HepG2 (cell line): ENCODE measurements at regions of chr11 and their contacts with region 1.

Region 1: GRCh38 chr11:94128746-94129511 is at the start of gene PANX1:
- DNase-seq: peak; percentile 76
- ATAC-seq: peak; percentile 91
- H3K4me3 ChIP-seq: peak within 1 kb of the TSS; percentile 90 to 96 (median 94)
- H3K27ac ChIP-seq: peak within 1 kb of the TSS; percentile 87
- H3K4me1 ChIP-seq: peaks cover 43% of the 10 kb centered on the region
- H3K27me3 ChIP-seq: no peaks in the 10 kb centered on the region; a peak in 1 of 5 replicates
- CTCF ChIP-seq: no peak
- EP300 ChIP-seq: peak in 1 of 2 experiments; percentile 26; a peak in 1 of 4 replicates
- POLR2A ChIP-seq: peak; percentile 57 to 74
- RAD21 ChIP-seq: peak; percentile 52; the same call in 1 of the 2 replicates
- total RNA-seq, gene PANX1: 21.7 and 24.8 TPM in 2 replicates

Region 2: DNA sequence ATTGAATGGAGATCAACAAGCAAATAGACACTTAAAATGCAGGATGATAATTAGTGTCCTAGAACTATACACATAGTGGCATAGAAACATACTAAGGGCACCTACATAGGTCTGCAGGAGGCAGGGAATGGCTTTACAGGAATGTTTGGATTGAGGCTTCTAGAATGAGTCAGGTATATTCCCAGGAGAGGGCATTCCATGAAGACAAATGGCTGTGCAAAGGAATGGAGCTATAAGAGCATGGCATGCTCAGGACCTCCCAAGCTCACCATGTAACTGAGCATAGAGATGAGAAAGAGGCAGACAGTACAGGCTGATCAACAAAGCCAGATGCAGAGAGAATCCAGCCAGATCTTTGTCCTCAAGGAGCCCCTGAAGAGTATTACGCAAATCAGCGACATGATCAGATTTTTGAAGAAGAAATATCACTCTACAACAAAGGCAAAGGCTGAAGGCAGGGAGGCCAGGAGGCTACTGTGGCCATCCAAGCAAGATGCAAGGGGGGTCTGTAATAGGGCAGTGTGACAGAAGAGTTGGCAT is 1370.6 kb before region 1 on chr11:
- CTCF ChIA-PET with region 1: no interaction called
- POLR2A ChIA-PET with region 1: no interaction called
- in situ Hi-C with region 1: no loop called
- intact Hi-C with region 1: no loop called
- DNase-seq: no peak
- ATAC-seq: no peak
- H3K4me3 ChIP-seq: no peak overlapping the region
- H3K27ac ChIP-seq: no peak overlapping the region
- H3K4me1 ChIP-seq: no peaks in the 10 kb centered on the region
- H3K27me3 ChIP-seq: no peaks in the 10 kb centered on the region
- CTCF ChIP-seq: no peak
- EP300 ChIP-seq: no peak
- POLR2A ChIP-seq: no peak
- RAD21 ChIP-seq: no peak

Region 3: GRCh38 chr11:93921695-93922468 is 207.0 kb before region 1 on chr11:
- CTCF ChIA-PET with region 1: no interaction called
- POLR2A ChIA-PET with region 1: interaction called, 3 read pairs
- in situ Hi-C with region 1: no loop called
- intact Hi-C with region 1: loop called (anchors 10 kb)
- DNase-seq: peak; percentile 56
- ATAC-seq: peak; percentile 85
- H3K4me3 ChIP-seq: no peak overlapping the region
- H3K27ac ChIP-seq: no peak overlapping the region
- H3K4me1 ChIP-seq: peaks cover 19% of the 10 kb centered on the region
- H3K27me3 ChIP-seq: no peaks in the 10 kb centered on the region
- CTCF ChIP-seq: peak; percentile 87
- EP300 ChIP-seq: no peak
- POLR2A ChIP-seq: no peak
- RAD21 ChIP-seq: peak; percentile 76

Region 4: GRCh38 chr11:94117871-94118270 is 11.1 kb before region 1 on chr11:
- CTCF ChIA-PET with region 1: no interaction called
- POLR2A ChIA-PET with region 1: interaction called, 16 read pairs
- in situ Hi-C with region 1: no loop called
- intact Hi-C with region 1: no loop called
- DNase-seq: no peak
- ATAC-seq: no peak
- H3K4me3 ChIP-seq: no peak overlapping the region
- H3K27ac ChIP-seq: no peak overlapping the region
- H3K4me1 ChIP-seq: peaks cover 19% of the 10 kb centered on the region
- H3K27me3 ChIP-seq: no peaks in the 10 kb centered on the region
- CTCF ChIP-seq: no peak
- EP300 ChIP-seq: no peak
- POLR2A ChIP-seq: no peak
- RAD21 ChIP-seq: no peak

Region 5: DNA sequence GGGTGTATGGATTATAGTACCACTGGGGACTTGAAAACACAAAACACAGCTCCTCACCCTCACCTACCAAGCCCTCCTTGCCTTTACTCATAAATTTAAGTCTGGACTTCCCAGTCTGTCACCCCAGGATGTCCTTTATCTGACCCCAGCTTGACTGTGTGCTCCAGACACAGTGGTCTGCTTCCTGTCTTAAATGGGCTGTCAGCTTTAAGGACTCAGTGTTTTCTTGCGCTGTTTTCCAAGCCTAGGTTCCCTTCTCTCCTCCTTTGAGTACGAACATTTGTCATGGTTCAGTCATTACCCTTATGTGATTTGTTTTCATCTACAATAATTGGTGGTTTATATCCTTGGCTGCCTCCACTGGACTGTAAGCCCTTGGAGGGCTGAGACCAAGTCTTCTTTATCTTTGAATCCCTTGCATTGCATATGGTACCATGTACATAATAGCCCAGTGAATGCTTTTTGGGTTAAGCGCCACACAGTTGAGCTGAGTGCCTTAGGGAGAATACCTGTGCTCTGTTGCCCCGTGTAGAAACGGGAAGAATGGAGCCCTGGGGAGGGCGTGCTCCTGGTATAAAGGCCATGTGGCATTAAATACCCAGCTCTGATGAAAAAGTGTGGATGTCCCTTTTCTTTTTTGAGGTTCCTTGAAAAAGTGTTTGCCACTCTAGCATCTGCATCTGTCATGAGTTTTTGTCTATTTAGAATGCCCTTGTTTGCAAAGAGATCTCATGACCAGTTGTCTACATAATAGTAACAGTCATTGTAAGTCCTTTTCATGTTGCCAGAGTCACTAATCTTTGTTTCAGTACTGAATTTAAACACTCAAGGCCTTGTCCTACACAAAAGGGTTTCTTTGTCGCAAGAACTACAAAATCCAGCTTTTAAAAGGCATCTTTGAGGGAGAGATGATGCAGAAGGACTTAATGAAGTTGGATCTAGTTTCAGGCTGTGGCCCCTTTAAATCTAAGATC is 13.7 kb after region 1 on chr11:
- CTCF ChIA-PET with region 1: no interaction called
- POLR2A ChIA-PET with region 1: interaction called, 10 read pairs
- in situ Hi-C with region 1: no loop called
- intact Hi-C with region 1: no loop called
- DNase-seq: peak; percentile 56
- ATAC-seq: 0 out of 3 replicates have a peak, but pooled peaks have one; percentile 18
- H3K4me3 ChIP-seq: no peak overlapping the region
- H3K27ac ChIP-seq: no peak overlapping the region
- H3K4me1 ChIP-seq: peaks cover 61% of the 10 kb centered on the region
- H3K27me3 ChIP-seq: no peaks in the 10 kb centered on the region
- CTCF ChIP-seq: no peak
- EP300 ChIP-seq: no peak
- POLR2A ChIP-seq: no peak
- RAD21 ChIP-seq: no peak

Region 6: DNA sequence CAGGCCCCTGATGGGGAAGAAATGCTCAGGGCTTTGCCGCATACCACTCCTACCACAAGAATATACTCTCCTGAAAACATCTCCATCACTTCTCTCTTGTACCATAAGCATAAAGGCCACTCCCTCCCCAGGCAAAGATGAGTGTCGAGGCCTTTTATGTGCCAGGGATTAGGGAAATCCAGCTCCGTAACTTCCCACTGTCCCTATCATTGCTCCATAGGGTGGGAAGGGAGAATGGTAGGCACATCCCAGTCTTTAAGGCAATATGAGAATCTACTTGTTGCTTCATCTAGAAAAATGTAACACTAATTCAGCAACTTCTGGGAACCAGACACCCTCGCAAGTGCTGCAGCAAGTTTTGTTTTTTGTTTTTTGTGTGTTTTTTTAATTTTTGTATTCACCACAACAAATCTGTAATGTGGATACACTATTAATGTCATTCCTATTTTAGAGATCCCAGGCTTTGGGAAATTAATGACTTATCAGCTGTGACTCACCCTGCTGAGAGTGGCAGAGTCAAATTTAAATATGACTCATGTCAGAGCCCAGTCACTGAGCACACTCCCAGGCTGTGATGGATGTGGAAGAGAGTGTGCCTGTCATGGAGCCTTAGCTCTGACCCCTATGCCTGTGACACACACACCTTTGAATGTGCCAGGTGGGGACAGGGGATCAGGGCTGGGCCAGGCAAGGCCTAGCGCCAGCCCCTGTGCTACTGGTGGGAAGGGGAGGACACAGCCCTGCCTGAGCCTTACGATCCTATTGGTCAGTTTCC is 23.2 kb after region 1 on chr11:
- CTCF ChIA-PET with region 1: no interaction called
- POLR2A ChIA-PET with region 1: interaction called, 30 read pairs
- in situ Hi-C with region 1: no loop called
- intact Hi-C with region 1: loop called (anchors 2 kb)
- DNase-seq: peak; percentile 72
- ATAC-seq: peak; percentile 82
- H3K4me3 ChIP-seq: peak overlapping the region in 1 of 3 experiments; percentile 20; a peak in 1 of 6 replicates
- H3K27ac ChIP-seq: peak overlapping the region; percentile 74
- H3K4me1 ChIP-seq: peaks cover 72% of the 10 kb centered on the region
- H3K27me3 ChIP-seq: no peaks in the 10 kb centered on the region
- CTCF ChIP-seq: no peak
- EP300 ChIP-seq: no peak
- POLR2A ChIP-seq: no peak
- RAD21 ChIP-seq: no peak

Region 7: GRCh38 chr11:94493281-94494125 is 364.6 kb after region 1 on chr11 and contains the starts of genes ANKRD49 and MRE11:
- CTCF ChIA-PET with region 1: no interaction called
- POLR2A ChIA-PET with region 1: interaction called, 5 read pairs
- in situ Hi-C with region 1: no loop called
- intact Hi-C with region 1: loop called (anchors 5 kb)
- DNase-seq: peak; percentile 97
- ATAC-seq: peak; percentile 99
- H3K4me3 ChIP-seq: peak within 1 kb of the TSS; percentile 80 to 90 (median 86)
- H3K27ac ChIP-seq: peak within 1 kb of the TSS; percentile 89
- H3K4me1 ChIP-seq: peaks cover 29% of the 10 kb centered on the region
- H3K27me3 ChIP-seq: no peaks in the 10 kb centered on the region; a peak in 1 of 5 replicates
- CTCF ChIP-seq: no peak
- EP300 ChIP-seq: no peak
- POLR2A ChIP-seq: peak; percentile 63 to 81
- RAD21 ChIP-seq: no peak
- total RNA-seq, gene ANKRD49: 14.2 and 18.0 TPM in 2 replicates
- total RNA-seq, gene MRE11: 37.3 and 58.2 TPM in 2 replicates